Naive thymus-derived CD4-positive, alpha-beta T cell (primary cell): ENCODE measurements at regions of chr10 and their contacts with region 1.

Region 1: DNA sequence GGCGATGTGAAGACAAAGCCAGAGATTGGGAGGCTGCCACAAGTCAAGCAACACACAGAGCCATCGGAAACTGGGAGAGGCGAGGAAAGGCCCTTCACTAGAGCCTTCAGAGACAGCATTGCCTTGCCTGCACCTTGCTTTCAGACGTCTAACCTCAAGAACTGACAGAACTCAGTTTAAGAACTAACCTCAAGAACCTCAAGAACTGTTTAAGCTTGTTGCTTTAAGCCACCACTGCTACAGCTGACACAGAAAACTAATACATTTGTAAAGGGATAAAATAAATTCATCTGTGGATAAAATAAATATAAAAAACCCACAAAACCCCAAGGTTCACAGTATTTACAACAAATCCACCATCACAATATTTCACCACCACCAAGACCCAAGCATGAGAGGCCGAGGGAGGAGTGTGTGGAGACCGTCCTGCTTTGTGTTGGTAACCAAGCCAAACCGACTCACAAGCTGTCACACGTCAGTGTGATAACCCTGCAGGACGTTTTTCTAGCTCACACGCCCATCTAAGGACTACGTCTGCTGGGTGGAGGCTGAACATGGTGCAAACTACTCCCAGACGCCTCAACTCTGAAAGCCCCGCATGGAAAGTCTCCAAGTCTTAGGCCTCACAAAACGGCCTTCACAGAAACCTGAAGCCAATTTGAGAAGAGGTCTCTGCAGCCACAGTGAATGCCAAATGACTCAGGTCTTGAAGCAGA is 116.8 kb downstream of the ABLIM1 start:
- DNase-seq: peak; percentile 38 to 92 (median 88)
- ATAC-seq: peak; percentile 88
- H3K4me3 ChIP-seq: peak overlapping the region; percentile 32
- H3K4me3 Mint-ChIP-seq: peak overlapping the region; percentile 74 to 86 (median 79)
- H3K27ac ChIP-seq: peak overlapping the region; percentile 94
- H3K27ac Mint-ChIP-seq: peak overlapping the region; percentile 94 to 99 (median 99)
- H3K4me1 ChIP-seq: peaks cover 85 to 97% of the 10 kb centered on the region in 2 donors
- H3K4me1 Mint-ChIP-seq: peaks cover 63 to 98% (median 94%) of the 10 kb centered on the region in 7 donors
- H3K27me3 ChIP-seq: no peaks in the 10 kb centered on the region
- H3K27me3 Mint-ChIP-seq: no peaks in the 10 kb centered on the region

Region 2: DNA sequence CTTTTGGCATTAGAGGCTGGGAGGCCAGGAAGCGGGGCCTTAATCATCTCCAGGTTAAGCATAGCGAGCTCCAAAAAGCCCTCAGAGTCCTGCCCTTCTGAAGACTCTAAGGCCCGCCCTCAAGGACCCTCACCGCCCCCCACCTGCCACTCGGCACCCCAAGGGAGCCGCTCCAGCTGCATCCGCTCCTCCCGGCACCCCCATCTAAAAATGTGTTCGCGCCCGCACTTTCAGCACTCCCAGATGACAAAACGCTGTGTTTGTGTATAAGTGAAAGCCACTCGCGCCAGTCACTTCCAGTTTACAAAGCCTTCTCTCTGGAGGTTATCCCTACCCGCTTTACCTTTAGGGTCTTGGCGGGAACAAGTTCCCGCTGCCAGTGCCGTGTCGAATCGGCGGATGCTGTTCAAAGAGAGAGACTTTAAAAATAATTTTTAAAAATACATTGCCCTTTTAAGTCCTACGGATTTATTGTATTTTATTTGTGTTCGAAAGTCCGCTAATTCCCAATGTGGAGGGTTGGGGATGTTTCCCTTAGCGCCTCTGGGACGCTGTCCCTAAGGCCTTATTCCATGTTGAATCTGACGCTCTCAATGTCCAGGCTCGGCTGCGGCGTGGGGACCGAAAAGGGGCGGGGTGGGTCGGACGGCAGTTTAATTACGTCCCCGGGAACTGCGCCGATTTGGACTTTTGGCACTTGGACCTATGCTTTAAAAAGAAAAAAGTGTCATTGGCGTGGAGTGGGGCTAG is 687.1 kb before region 1 on chr10 and contains the starts of genes DCLRE1A and NHLRC2:
- CTCF ChIA-PET with region 1: no interaction called
- POLR2A ChIA-PET with region 1: no interaction called
- intact Hi-C with region 1: loop called (anchors 5 to 10 kb)
- DNase-seq: peak; percentile 26 to 55 (median 50)
- ATAC-seq: peak; percentile 73
- H3K4me3 ChIP-seq: peak within 1 kb of the TSS; percentile 90
- H3K4me3 Mint-ChIP-seq: peak within 1 kb of the TSS; percentile 90 to 100 (median 97)
- H3K27ac ChIP-seq: peak within 1 kb of the TSS; percentile 79
- H3K27ac Mint-ChIP-seq: peak within 1 kb of the TSS; percentile 89 to 100 (median 97)
- H3K4me1 ChIP-seq: peaks cover 3 to 42% of the 10 kb centered on the region in 2 donors
- H3K4me1 Mint-ChIP-seq: peaks cover 24 to 60% (median 52%) of the 10 kb centered on the region in 7 donors
- H3K27me3 ChIP-seq: no peaks in the 10 kb centered on the region
- H3K27me3 Mint-ChIP-seq: no peaks in the 10 kb centered on the region
- total RNA-seq, gene DCLRE1A: 1.5 to 12.9 (median 4.3) TPM
- total RNA-seq, gene NHLRC2: 10.3 to 25.9 (median 20.5) TPM

Region 3: DNA sequence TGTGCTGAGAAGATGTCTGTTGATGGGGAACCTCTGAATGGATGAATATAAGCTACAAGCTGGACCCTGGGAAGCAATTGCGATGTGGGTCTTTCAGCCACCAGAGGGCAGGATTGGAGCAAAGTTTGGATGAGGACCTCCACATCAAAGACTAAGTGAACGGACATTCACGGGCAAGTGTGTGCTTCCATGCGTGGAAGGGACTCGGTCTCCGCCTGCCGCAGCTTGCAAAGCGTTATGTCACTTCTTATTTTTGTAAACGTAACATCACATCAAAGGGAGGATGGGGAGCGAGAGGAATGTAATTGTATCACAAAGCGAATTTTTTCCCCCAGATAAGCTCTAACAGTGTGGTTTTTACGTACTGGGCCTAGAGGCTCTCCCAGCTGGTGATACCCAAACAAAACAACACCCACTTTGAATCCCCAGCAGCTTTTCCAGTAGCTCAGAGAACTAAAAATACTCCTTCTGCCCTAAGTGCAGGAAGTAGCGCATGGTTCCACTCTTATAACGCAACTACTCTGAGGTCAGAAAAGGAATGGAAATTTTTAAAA is 237.1 kb before region 1 on chr10:
- CTCF ChIA-PET with region 1: no interaction called
- POLR2A ChIA-PET with region 1: no interaction called
- intact Hi-C with region 1: loop called in 1 of 2 experiments (anchors 5 kb)
- DNase-seq: peak; percentile 19 to 67 (median 52)
- ATAC-seq: peak; percentile 60
- H3K4me3 ChIP-seq: peak overlapping the region; percentile 68
- H3K4me3 Mint-ChIP-seq: peak overlapping the region; percentile 83 to 94 (median 92)
- H3K27ac ChIP-seq: peak overlapping the region; percentile 6
- H3K27ac Mint-ChIP-seq: peak overlapping the region in 8 of 9 donors; percentile 4 to 86 (median 68)
- H3K4me1 ChIP-seq: peaks cover 4 to 5% of the 10 kb centered on the region in 2 donors
- H3K4me1 Mint-ChIP-seq: peaks cover 9 to 13% (median 12%) of the 10 kb centered on the region in 7 donors
- H3K27me3 ChIP-seq: no peaks in the 10 kb centered on the region
- H3K27me3 Mint-ChIP-seq: no peaks in the 10 kb centered on the region

Region 4: DNA sequence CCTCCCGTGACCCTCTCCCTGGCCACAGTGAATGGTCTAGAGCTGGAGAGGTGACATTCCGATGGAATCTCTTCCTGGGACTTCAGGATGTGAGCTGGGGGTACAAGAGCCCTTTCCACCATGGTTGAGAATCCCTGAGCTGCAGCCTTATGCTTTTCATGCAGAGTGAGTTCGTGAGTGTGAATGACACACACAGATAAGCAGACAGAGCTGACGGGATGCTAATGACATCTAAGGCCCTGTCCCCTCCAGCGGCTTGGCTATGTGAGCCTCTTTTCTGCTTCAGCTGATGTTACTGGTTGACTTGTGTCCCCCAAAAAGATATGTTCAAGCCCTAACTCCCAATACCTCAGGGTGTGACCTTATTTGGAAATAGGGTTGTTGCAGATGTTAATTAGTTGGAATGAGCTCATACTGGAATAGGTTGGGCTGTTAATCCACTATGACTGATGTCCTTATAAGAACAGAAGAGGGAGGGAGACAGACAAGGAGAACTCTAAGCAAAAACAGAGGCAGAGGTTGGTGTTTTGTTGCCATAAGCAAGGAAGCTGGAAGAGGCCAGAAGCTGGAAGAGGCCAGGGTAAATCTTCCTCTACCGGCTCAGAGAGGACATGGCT is 25.8 kb before region 1 on chr10:
- CTCF ChIA-PET with region 1: interaction called, 283 read pairs
- POLR2A ChIA-PET with region 1: interaction called, 355 read pairs
- intact Hi-C with region 1: loop called in 1 of 2 experiments (anchors 1 kb)
- DNase-seq: peak in 1 of 9 donors; percentile 36
- ATAC-seq: no peak
- H3K4me3 ChIP-seq: no peak overlapping the region
- H3K4me3 Mint-ChIP-seq: peak overlapping the region in 9 of 10 donors; percentile 72 to 97 (median 89)
- H3K27ac ChIP-seq: peak overlapping the region; percentile 94
- H3K27ac Mint-ChIP-seq: peak overlapping the region in 8 of 9 donors; percentile 74 to 100 (median 97)
- H3K4me1 ChIP-seq: peaks cover 8 to 90% of the 10 kb centered on the region in 2 donors
- H3K4me1 Mint-ChIP-seq: peaks cover 78 to 98% (median 94%) of the 10 kb centered on the region in 7 donors
- H3K27me3 ChIP-seq: no peaks in the 10 kb centered on the region
- H3K27me3 Mint-ChIP-seq: no peaks in the 10 kb centered on the region

Region 5: DNA sequence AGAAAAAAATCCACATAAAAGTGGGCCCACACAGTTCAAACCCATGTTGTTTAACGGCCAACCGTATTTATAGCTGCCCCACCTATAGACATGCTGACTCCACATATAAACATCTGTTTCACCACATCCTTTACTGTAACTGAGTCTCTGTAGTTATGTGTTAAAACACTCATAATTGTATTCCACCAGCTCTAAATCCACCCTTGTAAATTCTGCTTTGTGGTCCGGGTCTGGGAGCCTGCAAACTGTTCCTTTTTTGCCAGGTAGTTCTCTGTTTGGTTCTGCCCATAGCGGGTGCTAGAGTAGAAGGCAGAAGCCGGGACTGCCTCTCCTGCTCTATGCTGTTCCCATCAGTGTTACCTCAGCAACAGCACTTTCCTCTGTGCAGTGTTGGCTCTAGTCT is 260.2 kb after region 1 on chr10:
- CTCF ChIA-PET with region 1: no interaction called
- POLR2A ChIA-PET with region 1: no interaction called
- intact Hi-C with region 1: loop called in 1 of 2 experiments (anchors 1 kb)
- DNase-seq: peak in 5 of 9 donors; percentile 2 to 29 (median 7)
- ATAC-seq: peak; percentile 78
- H3K4me3 ChIP-seq: no peak overlapping the region
- H3K4me3 Mint-ChIP-seq: peak overlapping the region in 5 of 10 donors; percentile 8 to 76 (median 19)
- H3K27ac ChIP-seq: no peak overlapping the region
- H3K27ac Mint-ChIP-seq: peak overlapping the region in 2 of 9 donors; percentile 61 to 96
- H3K4me1 ChIP-seq: peaks cover 9 to 10% of the 10 kb centered on the region in 2 donors
- H3K4me1 Mint-ChIP-seq: peaks cover 10 to 48% (median 16%) of the 10 kb centered on the region in 7 donors
- H3K27me3 ChIP-seq: no peaks in the 10 kb centered on the region
- H3K27me3 Mint-ChIP-seq: peaks cover 0 to 6% (median 0%) of the 10 kb centered on the region in 5 donors